Posterior vena cava (tissue), 2 donors: ENCODE measurements at regions of chr1 and their contacts with region 1.

Region 1: DNA sequence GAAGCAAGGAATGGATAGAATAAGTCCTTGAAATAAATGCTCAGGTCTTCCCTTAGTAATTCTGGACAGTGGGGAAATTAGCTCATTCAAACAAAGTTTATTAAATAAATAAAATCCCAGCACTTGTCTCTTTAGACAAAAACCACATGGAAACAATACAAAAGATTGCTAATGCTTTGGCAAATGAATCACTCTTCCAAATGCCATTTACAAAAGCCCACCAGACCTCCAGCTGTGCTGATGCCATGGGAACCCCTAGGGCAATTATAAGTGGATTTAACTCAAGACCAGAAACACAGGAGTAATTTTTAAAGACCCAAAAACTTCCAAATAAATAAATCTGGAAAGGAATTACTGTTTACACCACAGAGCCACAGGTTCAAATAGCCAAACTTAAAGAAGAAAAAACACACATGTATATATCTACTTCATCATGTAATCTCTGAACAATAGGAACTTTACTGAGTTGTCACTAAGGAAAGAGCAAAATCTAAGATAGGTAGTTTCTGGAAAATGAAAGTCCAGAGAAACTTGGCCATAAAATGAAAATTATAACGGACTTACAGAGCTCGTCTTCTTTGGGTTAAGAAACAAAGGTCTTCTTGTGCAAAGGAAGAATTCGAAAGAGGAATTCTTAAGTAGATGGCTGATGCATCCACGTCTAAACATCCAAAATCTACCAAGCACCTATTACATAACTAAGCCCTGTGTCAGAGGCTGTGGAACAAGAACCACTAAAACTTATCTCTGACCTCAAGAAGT is 399.4 kb downstream of the SMYD3 start:
- DNase-seq: no peak

Region 2: GRCh38 chr1:245248231-245248731 is 859.4 kb before region 1 on chr1:
- intact Hi-C with region 1: no loop called
- DNase-seq: no peak

Region 3: DNA sequence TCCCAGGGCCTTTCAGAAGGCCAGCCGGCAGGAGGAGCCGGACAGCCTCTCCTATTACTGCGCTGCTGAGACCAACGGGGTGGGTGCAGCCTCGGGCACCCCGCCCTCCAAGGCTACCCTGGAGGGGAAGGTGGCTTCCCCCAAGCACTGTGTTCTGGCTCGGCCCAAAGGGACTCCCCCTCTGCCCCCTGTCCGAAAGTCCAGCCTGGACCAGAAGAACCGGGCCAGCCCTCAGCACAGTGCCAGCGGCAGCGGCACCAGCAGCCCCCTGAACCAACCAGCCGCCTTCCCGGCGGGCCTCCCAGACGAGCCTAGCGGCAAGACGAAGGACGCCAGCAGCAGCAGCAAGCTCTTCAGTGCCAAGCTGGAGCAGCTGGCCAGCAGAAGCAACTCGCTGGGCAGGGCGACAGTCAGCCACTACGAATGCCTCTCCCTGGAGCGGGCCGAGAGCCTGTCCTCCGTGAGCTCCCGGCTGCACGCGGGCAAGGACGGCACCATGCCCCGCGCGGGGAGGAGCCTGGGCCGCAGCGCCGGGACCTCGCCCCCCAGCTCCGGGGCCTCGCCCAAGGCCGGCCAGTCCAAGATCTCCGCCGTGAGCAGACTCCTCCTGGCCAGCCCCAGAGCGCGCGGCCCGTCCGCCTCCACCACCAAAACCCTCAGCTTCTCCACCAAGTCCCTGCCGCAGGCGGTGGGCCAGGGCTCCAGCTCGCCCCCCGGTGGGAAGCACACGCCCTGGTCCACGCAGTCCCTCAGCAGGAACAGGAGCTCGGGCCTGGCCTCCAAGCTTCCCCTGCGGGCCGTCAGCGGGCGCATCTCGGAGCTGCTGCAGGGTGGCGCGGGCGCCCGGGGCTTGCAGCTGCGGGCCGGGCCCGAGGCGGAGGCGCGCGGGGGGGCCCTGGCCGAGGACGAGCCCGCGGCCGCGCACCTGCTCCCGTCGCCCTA is 419.8 kb before region 1 on chr1:
- intact Hi-C with region 1: no loop called
- DNase-seq: no peak

Region 4: GRCh38 chr1:245990315-245991022 is 117.2 kb before region 1 on chr1:
- intact Hi-C with region 1: loop called in 1 of 2 experiments (anchors 5 kb)
- DNase-seq: no peak

Region 5: DNA sequence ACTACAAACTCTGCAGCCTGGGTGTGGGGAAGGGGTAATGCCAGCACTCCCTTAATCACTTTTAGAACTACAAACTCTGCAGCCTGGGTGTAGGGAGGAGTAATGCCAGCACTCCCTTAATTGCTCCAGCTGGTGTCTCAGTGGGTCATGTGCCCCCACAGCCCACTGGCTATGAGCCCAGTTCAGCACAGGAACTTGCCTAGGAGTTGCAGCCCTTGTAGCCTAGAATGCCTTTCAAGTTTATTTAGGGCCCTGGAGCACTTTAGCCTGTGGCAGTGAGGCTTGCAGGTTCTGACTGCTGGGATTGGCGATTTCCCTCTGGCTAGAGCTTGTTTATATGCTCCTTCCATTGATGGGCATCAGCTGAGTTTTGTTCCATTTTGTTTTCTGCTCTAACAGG is 1165.3 kb after region 1 on chr1:
- intact Hi-C with region 1: no loop called
- DNase-seq: no peak